Cardiac septum (tissue), 1 donor: ENCODE measurements at regions of chr2 and their contacts with region 1.

Region 1: GRCh38 chr2:30394096-30394495 is 53.0 kb upstream of the LCLAT1 start:
- DNase-seq: no peak

Region 2: DNA sequence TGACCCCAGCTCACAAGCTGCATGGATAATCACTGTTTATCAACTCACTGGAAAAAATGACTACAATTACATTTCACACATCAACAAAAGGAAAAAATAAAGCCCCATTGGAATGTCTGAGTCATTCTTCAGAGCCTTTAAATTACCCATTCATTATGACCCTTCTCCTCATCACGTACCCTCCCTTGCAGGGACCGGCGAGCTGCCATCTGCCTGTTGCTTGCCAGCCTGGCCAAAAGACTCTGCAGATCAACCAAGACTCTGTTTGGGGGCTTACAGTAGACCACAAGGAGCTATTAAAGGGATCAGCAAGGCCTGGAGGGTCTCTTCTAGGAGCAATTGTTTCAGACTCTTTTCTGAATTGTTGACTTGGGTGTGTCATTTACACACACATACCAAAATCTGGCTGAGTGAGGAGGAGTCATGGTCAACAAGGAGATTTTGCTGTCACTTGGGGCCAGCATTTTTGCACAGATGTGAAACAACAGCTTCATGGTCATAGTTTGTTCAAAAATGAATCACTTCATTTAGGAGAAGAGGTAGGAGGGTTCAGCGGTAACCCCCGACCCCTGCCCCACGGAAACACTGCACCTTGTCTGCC is 120.7 kb before region 1 on chr2:
- intact Hi-C with region 1: no loop called
- DNase-seq: peak; percentile 60

Region 3: DNA sequence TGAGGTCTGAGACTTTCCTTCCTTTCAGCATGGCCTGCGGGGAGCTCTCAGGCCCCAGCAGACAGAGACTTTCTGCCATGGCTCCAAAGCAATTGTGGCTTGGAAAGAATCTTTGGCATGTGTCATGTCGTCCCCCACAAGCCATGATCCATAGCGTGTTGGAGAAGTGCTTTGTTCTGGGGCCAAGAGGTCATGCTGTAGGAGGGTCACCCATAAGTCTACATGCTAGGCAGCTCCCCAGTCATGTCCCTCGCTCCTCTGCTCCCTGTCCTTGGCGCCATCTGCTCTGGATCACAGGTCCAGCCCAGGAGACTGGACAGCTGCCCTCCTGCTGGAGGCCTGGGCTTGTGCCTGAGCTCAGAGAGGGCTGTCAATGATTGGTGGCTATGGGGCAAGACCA is 25.8 kb before region 1 on chr2:
- intact Hi-C with region 1: loop called (anchors 2 kb)
- DNase-seq: no peak

Region 4: DNA sequence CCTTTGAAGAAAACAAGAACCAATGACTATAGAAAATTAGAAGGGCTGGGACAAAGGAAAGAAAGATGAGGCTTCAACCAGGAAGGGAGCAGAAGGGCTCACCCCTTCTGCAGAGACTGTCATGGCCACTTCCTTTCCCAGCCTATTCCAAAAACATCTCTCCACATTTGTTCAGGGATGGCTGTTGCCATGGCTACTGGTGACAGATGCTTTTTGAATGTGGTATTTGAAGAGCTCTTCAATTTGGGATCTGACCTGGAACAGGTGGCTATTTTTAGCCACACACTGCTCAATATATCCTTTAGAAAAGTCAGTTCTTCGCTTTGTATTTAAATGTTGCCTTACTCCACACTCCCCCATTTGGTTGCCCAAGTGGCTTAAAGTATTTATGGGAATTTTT is 11.1 kb before region 1 on chr2:
- intact Hi-C with region 1: no loop called
- DNase-seq: no peak